ENCODE measurements at regions of chr5 and their contacts with region 1.

Region 1: GRCh38 chr5:172833686-172834414 is at the start of gene ERGIC1:
- DNase-seq: peak; percentile 91
- H3K4me3 Mint-ChIP-seq: peak within 1 kb of the TSS; percentile 87
- H3K27ac Mint-ChIP-seq: peak within 1 kb of the TSS; percentile 88
- H3K4me1 Mint-ChIP-seq: peaks cover 40% of the 10 kb centered on the region
- H3K27me3 Mint-ChIP-seq: no peaks in the 10 kb centered on the region
- CTCF ChIP-seq: peak; percentile 26
- total RNA-seq, gene ERGIC1: 257 and 292 TPM in 2 replicates

Region 2: GRCh38 chr5:172678902-172679301 is 154.9 kb before region 1 on chr5:
- CTCF ChIA-PET with region 1: no interaction called
- POLR2A ChIA-PET with region 1: no interaction called
- intact Hi-C with region 1: no loop called
- DNase-seq: no peak
- H3K4me3 Mint-ChIP-seq: no peak overlapping the region
- H3K27ac Mint-ChIP-seq: no peak overlapping the region
- H3K4me1 Mint-ChIP-seq: no peaks in the 10 kb centered on the region
- H3K27me3 Mint-ChIP-seq: no peaks in the 10 kb centered on the region
- CTCF ChIP-seq: no peak

Region 3: DNA sequence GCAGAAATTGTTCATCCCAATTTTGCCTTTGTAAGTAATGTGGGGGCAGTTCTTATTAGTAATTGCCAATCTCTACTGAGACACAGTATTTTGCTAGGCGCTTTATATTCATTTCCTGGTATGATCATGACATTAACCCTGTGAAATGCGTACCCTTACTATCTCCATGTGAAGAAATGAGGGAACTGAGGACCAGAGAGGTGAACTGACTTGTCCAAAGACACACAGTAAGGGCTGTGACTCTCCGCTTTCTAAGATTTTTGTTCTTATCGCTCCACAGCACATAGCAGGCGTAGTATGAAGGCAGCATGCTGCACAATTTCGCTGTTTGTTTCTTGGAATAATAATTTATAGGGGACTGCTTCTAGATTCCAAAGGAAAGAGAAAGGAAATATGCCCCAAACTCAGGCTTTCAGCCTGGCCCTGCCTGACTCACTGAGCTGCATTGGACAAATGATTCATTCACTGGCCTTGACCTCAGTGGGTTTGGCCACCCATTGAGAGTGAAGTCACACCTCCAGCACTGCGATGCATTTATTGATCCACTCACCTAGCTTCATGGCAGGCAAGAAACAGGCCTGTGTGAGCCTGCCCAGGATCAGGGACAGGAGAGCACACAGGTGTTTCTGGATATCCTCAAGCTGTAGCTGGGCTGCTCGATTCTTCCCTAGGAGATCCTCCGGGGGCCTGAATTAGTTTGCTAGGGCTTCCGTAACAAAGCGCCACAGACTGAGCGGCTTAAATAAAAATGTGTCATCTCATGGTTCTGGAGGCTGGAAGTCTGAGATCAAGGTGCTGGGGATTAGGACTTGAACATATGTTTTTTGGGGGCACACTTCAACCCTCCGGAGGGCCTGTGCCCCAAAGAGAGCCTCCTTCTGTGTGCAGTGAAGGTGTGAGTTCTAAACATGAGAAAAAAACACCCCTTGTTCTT is 55.7 kb before region 1 on chr5:
- CTCF ChIA-PET with region 1: interaction called, 10 read pairs
- POLR2A ChIA-PET with region 1: interaction called, 112 read pairs
- intact Hi-C with region 1: no loop called
- DNase-seq: peak; percentile 97
- H3K4me3 Mint-ChIP-seq: peak overlapping the region; percentile 69
- H3K27ac Mint-ChIP-seq: peak overlapping the region; percentile 99
- H3K4me1 Mint-ChIP-seq: peaks cover 70% of the 10 kb centered on the region
- H3K27me3 Mint-ChIP-seq: no peaks in the 10 kb centered on the region
- CTCF ChIP-seq: no peak

Region 4: GRCh38 chr5:172801184-172801671 is 32.6 kb before region 1 on chr5:
- CTCF ChIA-PET with region 1: interaction called, 5 read pairs
- POLR2A ChIA-PET with region 1: interaction called, 32 read pairs
- intact Hi-C with region 1: loop called (anchors 1 kb)
- DNase-seq: peak; percentile 94
- H3K4me3 Mint-ChIP-seq: peak overlapping the region; percentile 22
- H3K27ac Mint-ChIP-seq: peak overlapping the region; percentile 89
- H3K4me1 Mint-ChIP-seq: peaks cover 53% of the 10 kb centered on the region
- H3K27me3 Mint-ChIP-seq: no peaks in the 10 kb centered on the region
- CTCF ChIP-seq: no peak

Region 5: GRCh38 chr5:172849606-172850453 is 16.0 kb after region 1 on chr5:
- CTCF ChIA-PET with region 1: interaction called, 10 read pairs
- POLR2A ChIA-PET with region 1: interaction called, 29 read pairs
- intact Hi-C with region 1: no loop called
- DNase-seq: peak; percentile 68
- H3K4me3 Mint-ChIP-seq: no peak overlapping the region
- H3K27ac Mint-ChIP-seq: peak overlapping the region; percentile 49
- H3K4me1 Mint-ChIP-seq: peaks cover 78% of the 10 kb centered on the region
- H3K27me3 Mint-ChIP-seq: no peaks in the 10 kb centered on the region
- CTCF ChIP-seq: no peak

Region 6: GRCh38 chr5:172910828-172911627 is 77.2 kb after region 1 on chr5:
- CTCF ChIA-PET with region 1: no interaction called
- POLR2A ChIA-PET with region 1: interaction called, 21 read pairs
- intact Hi-C with region 1: loop called (anchors 2 kb)
- DNase-seq: peak; percentile 99
- H3K4me3 Mint-ChIP-seq: no peak overlapping the region
- H3K27ac Mint-ChIP-seq: peak overlapping the region; percentile 90
- H3K4me1 Mint-ChIP-seq: peaks cover 43% of the 10 kb centered on the region
- H3K27me3 Mint-ChIP-seq: no peaks in the 10 kb centered on the region
- CTCF ChIP-seq: peak; percentile 50